AG04450 (cell line): ENCODE measurements at regions of chr5 and their contacts with region 1.

Region 1: GRCh38 chr5:119411935-119412602 is 40.2 kb upstream of the HSD17B4 start:
- DNase-seq: peak; percentile 52
- H3K4me3 ChIP-seq: peak overlapping the region; percentile 60
- H3K27ac ChIP-seq: peak overlapping the region; percentile 71
- H3K27me3 ChIP-seq: no peaks in the 10 kb centered on the region
- CTCF ChIP-seq: peak; percentile 94

Region 2: GRCh38 chr5:119022017-119022745 is 389.9 kb before region 1 on chr5:
- CTCF ChIA-PET with region 1: interaction called, 54 read pairs
- POLR2A ChIA-PET with region 1: no interaction called
- DNase-seq: peak; percentile 15
- H3K4me3 ChIP-seq: no peak overlapping the region
- H3K27ac ChIP-seq: no peak overlapping the region
- H3K27me3 ChIP-seq: no peaks in the 10 kb centered on the region
- CTCF ChIP-seq: peak; percentile 64

Region 3: GRCh38 chr5:119179857-119180641 is 232.0 kb before region 1 on chr5:
- CTCF ChIA-PET with region 1: interaction called, 17 read pairs
- POLR2A ChIA-PET with region 1: no interaction called
- DNase-seq: no peak
- H3K4me3 ChIP-seq: no peak overlapping the region
- H3K27ac ChIP-seq: no peak overlapping the region
- H3K27me3 ChIP-seq: no peaks in the 10 kb centered on the region
- CTCF ChIP-seq: no peak

Region 4: DNA sequence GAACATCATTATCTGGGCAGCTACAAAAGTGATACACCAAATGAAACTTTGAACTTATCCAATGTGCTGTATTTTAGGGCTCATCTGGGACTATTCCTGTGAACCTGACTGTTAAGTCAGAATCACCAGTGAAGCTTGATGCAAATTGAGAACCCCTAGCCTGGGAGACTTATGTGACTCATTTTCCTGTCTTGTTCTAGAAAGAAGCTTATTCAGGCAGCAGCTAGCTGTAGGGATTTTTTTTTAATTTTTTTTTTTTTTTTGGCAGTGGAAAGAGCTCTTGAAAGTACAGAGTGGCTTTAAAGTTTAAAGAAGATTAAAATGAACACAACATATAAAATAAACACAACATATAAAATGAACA is 137.3 kb before region 1 on chr5:
- CTCF ChIA-PET with region 1: interaction called, 18 read pairs
- POLR2A ChIA-PET with region 1: no interaction called
- DNase-seq: peak; percentile 29
- H3K4me3 ChIP-seq: no peak overlapping the region
- H3K27ac ChIP-seq: no peak overlapping the region
- H3K27me3 ChIP-seq: no peaks in the 10 kb centered on the region
- CTCF ChIP-seq: no peak

Region 5: DNA sequence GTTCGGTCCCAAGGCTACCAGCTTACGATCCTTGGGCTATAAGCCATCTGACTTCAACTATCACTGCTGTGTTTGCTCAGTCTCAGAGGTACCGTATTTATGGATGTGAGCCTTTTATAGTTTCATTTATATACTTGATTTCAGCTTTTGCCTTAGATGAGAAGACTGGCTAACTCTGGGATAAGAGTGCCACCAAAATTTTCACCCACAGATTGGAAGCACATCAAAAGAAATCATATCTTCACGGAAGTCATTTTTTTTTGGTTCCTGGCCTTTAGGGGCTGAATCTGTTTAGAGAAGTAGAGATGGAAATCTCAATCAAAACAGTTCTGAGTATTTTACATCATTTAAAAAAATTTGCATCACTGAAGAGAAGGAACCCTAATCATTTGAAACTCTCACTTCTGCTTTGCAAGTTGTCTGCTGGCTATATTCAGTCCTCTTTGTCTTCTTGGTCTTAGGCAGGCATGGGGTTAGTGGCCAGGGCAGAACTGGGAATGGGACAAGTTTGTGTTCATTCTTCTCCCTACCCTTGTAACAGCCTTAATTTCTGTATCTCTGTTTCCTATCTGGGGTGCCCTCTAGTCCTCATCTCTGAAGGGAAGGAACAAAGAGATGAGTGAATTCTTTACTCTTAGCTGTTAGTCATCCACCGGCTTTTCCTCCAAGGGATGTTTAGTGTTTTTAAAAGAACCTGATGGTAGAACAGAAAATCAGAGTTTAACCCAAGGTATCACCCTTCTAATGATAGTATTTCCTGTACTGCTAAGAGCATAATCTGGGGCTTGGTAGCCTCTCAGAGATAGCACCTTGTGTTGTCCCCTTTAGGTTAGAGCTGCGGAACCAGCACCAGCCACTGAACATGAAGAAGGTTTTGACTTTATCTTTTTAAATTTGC is 70.4 kb before region 1 on chr5:
- CTCF ChIA-PET with region 1: interaction called, 22 read pairs
- POLR2A ChIA-PET with region 1: no interaction called
- DNase-seq: no peak
- H3K4me3 ChIP-seq: no peak overlapping the region
- H3K27ac ChIP-seq: no peak overlapping the region
- H3K27me3 ChIP-seq: no peaks in the 10 kb centered on the region
- CTCF ChIP-seq: no peak

Region 6: GRCh38 chr5:119483155-119483554 is 71.1 kb after region 1 on chr5:
- CTCF ChIA-PET with region 1: no interaction called
- POLR2A ChIA-PET with region 1: interaction called, 10 read pairs
- DNase-seq: no peak
- H3K4me3 ChIP-seq: no peak overlapping the region
- H3K27ac ChIP-seq: no peak overlapping the region
- H3K27me3 ChIP-seq: no peaks in the 10 kb centered on the region
- CTCF ChIP-seq: no peak

Region 7: GRCh38 chr5:119743927-119744326 is 331.9 kb after region 1 on chr5:
- CTCF ChIA-PET with region 1: no interaction called
- POLR2A ChIA-PET with region 1: no interaction called
- DNase-seq: no peak
- H3K4me3 ChIP-seq: no peak overlapping the region
- H3K27ac ChIP-seq: no peak overlapping the region
- H3K27me3 ChIP-seq: no peaks in the 10 kb centered on the region
- CTCF ChIP-seq: 0 out of 2 replicates have a peak, but pooled peaks have one; percentile 17